HEK293T (cell line): ENCODE measurements at regions of chr14 and their contacts with region 1.

Region 1: GRCh38 chr14:59897761-59898383 is 22.1 kb upstream of the LRRC9 start:
- DNase-seq: peak; percentile 58

Region 2: DNA sequence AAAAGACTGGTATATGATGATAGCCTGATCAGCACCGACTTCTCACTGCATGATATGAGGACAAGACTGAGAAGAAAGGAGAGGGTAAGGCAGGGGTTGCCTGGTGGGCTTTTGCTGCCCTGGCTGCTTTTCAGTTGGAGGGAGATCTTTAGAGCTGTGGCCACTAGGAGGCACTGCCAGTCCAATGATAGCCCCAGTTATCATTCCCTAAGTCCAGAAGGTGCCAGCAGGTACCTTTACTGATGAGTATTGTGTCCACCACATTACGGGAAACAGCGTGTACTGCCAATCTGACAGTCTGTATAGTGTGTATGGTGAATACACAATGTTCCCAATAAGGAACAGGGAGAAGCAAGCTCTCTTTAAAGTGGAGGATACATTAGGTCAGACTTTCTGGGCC is 265.5 kb before region 1 on chr14:
- CTCF ChIA-PET with region 1: interaction called, 25 read pairs
- POLR2A ChIA-PET with region 1: no interaction called
- DNase-seq: peak; percentile 63

Region 3: DNA sequence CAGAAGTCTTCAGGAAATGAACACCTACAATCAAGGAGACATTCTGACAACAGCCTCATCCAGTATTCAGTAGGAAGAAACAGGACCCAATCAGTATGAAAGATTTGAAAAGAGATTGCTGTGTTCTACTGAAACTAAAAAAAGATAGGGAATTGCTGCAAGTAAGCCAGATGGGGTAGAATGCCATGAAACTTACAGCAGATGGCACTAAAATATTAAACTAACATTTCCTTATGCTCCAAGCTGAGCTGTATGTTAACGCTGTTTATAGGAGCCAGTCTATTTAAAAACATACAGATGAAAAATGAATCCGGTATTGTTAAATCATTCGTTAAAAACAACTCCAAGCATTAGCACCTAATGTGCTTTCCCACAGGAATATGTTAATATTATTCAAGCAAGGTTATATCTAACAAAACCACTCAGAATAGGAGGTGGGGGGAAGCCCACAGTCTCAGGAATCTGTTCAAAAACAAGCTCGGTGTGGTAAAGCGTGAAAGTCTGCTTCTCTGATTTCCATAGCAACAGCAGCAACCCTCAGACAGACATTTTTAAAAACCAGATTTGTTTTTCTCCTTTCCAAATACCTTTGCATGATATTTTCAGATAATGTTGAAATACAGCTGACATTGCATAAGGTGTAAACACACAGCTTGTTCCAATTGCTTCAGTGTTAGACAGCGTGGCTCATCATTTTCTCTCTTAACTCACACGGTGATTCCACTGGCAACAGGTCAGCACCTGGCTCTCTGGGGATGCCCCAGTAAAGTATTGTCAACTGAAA is 189.9 kb before region 1 on chr14:
- CTCF ChIA-PET with region 1: interaction called, 10 read pairs
- POLR2A ChIA-PET with region 1: no interaction called
- DNase-seq: no peak